GM18951 (cell line): ENCODE measurements at regions of chr7 and their contacts with region 1.

Region 1: DNA sequence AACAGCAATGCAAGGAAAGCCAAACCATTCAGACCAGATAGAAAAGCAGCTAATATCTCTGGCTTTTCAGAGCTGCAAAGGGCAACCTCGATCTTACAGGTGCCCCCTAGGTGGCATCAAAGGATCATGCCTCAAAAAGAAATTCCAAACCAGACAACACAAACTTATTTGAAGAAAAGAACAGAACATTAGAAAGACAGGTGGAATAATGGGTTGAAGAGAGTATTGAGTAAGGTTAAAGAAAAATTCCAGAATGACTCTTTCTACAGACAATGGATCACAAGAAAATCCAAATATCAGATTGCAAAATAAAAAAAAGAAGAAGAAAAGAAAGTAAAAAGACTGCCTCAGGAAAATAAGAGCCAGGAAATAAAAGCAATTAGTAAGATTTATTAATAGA is 213.7 kb downstream of the ELMO1 start:
- POLR2A ChIP-seq: no peak

Region 2: DNA sequence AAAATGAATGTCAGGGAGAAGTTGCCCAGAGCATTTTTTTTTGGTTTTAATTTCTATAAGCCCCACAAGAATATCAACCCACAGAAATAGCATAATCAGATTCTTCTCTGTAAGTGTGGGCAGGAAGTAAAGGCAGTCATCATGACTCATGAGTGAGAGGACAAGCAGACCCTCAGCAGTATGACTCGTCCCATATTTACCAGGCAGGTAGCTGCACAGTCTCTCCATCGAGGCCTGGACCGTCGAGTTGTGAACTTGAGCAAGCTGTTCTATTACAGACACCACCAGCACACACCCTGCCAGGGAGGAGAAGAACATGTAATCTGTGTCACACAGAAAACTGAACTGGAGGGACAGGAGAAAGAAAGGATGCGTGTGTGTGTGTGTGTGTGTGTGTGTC is 548.4 kb before region 1 on chr7:
- in situ Hi-C with region 1: no loop called
- POLR2A ChIP-seq: no peak

Region 3: DNA sequence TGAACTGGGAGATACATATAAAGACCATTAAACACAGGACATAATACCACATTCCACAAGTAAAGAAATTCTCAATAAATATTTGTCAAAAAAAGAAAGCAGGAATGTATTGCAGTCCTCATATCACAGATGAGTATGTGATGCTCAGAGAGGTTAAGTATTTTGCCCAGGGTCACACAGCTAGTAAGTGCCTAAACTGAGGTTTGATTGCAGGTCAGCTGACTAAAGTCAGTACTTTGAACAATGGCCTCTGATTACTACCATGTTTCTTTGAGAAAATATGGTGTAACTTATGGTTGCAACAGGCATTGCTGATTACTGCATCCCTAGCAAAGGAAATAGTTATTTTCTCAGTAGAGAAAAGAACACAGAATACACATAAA is 53.4 kb before region 1 on chr7:
- in situ Hi-C with region 1: no loop called
- POLR2A ChIP-seq: no peak

Region 4: GRCh38 chr7:37342688-37343471 is 108.0 kb after region 1 on chr7:
- in situ Hi-C with region 1: loop called (anchors 10 kb)
- POLR2A ChIP-seq: peak; percentile 62

Region 5: GRCh38 chr7:37510043-37510634 is 275.2 kb after region 1 on chr7:
- in situ Hi-C with region 1: loop called (anchors 25 kb)
- POLR2A ChIP-seq: no peak

Region 6: GRCh38 chr7:37820708-37821468 is 586.0 kb after region 1 on chr7:
- in situ Hi-C with region 1: loop called (anchors 10 kb)
- POLR2A ChIP-seq: no peak